CD8-positive, alpha-beta T cell (primary cell): ENCODE measurements at regions of chr10 and their contacts with region 1.

Region 1: GRCh38 chr10:17607603-17608332 is 9.4 kb downstream of the HACD1 start:
- DNase-seq: peak in 3 of 9 experiments; percentile 22 to 75 (median 61)
- ATAC-seq: peak; percentile 69
- H3K4me3 ChIP-seq: no peak overlapping the region
- H3K4me3 Mint-ChIP-seq: no peak overlapping the region
- H3K27ac ChIP-seq: no peak overlapping the region
- H3K27ac Mint-ChIP-seq: no peak overlapping the region
- H3K4me1 ChIP-seq: no peaks in the 10 kb centered on the region
- H3K4me1 Mint-ChIP-seq: peaks cover 2% of the 10 kb centered on the region
- H3K27me3 ChIP-seq: no peaks in the 10 kb centered on the region
- H3K27me3 Mint-ChIP-seq: peaks cover 2% of the 10 kb centered on the region
- CTCF ChIP-seq: peak; percentile 97

Region 2: GRCh38 chr10:17290226-17290625 is 317.5 kb before region 1 on chr10:
- CTCF ChIA-PET with region 1: no interaction called
- POLR2A ChIA-PET with region 1: no interaction called
- intact Hi-C with region 1: loop called in 1 of 2 experiments (anchors 10 kb)
- DNase-seq: peak in 2 of 9 experiments; percentile 24 to 47
- ATAC-seq: no peak
- H3K4me3 ChIP-seq: no peak overlapping the region
- H3K4me3 Mint-ChIP-seq: no peak overlapping the region
- H3K27ac ChIP-seq: no peak overlapping the region
- H3K27ac Mint-ChIP-seq: no peak overlapping the region
- H3K4me1 ChIP-seq: no peaks in the 10 kb centered on the region
- H3K4me1 Mint-ChIP-seq: peaks cover 4% of the 10 kb centered on the region
- H3K27me3 ChIP-seq: no peaks in the 10 kb centered on the region
- H3K27me3 Mint-ChIP-seq: peaks cover 18% of the 10 kb centered on the region
- CTCF ChIP-seq: no peak

Region 3: DNA sequence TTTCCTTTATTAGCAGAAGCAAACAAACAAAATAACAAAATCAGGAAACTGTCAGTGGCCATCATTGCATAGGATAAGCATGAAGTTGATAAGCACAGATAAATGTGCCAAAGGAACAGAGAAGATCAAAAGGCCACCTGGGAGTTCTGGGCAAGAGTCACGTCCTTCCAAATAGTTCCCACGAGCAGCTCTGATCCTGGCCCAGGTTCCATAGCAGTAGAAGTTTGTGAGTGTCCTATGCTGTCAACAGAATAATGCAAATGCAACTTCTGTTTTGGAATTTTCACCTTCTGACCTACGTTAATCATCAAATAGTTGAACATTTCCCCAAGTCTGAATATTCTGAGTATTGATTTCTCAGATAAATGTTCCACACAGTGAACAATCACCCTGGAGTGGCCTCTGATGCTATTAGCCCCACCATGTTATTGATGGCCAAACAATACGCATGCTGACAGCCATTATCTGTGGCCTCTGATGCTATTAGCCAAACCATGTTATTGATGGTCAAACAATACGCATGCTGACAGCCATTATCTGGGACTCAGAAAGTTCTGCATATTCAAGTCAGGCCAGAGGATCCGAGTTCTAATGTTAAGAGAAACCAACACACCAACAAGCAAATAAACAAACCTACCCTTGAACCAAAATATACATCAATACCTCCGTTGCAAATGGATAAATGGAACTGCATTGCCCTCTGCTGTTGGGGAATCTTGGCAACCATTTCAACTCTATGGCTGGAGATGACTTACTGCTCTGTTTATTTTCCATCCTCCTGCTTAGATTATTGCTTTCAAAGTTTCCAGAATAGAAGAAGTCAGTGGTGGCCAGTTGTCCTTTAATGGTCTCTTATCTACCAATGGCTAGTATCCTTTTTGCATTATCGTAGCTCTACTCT is 264.7 kb after region 1 on chr10:
- CTCF ChIA-PET with region 1: no interaction called
- POLR2A ChIA-PET with region 1: no interaction called
- intact Hi-C with region 1: loop called in 1 of 2 experiments (anchors 5 kb)
- DNase-seq: peak in 2 of 9 experiments; percentile 31 to 41
- ATAC-seq: no peak
- H3K4me3 ChIP-seq: no peak overlapping the region
- H3K4me3 Mint-ChIP-seq: no peak overlapping the region
- H3K27ac ChIP-seq: no peak overlapping the region
- H3K27ac Mint-ChIP-seq: no peak overlapping the region
- H3K4me1 ChIP-seq: no peaks in the 10 kb centered on the region
- H3K4me1 Mint-ChIP-seq: no peaks in the 10 kb centered on the region
- H3K27me3 ChIP-seq: no peaks in the 10 kb centered on the region
- H3K27me3 Mint-ChIP-seq: no peaks in the 10 kb centered on the region
- CTCF ChIP-seq: no peak

Region 4: DNA sequence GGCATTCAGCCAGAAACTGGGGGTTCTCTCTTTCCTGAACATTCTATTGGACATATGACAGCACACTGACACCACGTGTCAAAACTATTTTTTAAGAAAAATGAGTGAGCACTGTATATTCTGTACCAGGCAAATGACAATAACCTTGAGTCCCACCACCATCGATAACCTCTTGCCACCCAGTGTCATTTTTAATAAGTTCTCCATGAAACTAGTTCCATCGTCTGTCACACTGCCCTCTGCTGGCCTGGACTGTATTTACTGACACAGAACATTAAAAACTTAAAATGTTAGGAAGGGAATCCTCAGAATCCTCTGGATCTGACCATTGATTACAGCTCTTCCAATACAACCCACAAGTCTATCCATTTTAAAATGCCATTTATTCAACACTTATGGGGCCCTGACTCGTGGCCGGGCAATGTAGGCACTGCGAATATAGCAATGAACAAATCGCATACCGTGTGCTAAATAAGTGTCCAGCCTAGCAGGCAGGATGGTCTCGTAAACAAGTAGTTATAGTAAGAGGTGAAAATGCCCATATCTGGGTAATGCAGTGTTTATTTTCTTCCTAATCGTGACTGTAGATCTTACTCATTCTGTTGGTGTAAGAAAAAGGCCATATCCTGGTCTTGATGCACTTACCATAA is 496.6 kb after region 1 on chr10:
- CTCF ChIA-PET with region 1: no interaction called
- POLR2A ChIA-PET with region 1: no interaction called
- intact Hi-C with region 1: loop called in 1 of 2 experiments (anchors 2 kb)
- DNase-seq: peak in 7 of 9 experiments; percentile 6 to 37 (median 14)
- ATAC-seq: no peak
- H3K4me3 ChIP-seq: no peak overlapping the region
- H3K4me3 Mint-ChIP-seq: no peak overlapping the region
- H3K27ac ChIP-seq: no peak overlapping the region
- H3K27ac Mint-ChIP-seq: no peak overlapping the region
- H3K4me1 ChIP-seq: no peaks in the 10 kb centered on the region
- H3K4me1 Mint-ChIP-seq: no peaks in the 10 kb centered on the region
- H3K27me3 ChIP-seq: no peaks in the 10 kb centered on the region
- H3K27me3 Mint-ChIP-seq: peaks cover 2% of the 10 kb centered on the region
- CTCF ChIP-seq: peak; percentile 21

Region 5: GRCh38 chr10:18238870-18239485 is 631.2 kb after region 1 on chr10:
- CTCF ChIA-PET with region 1: interaction called, 3 read pairs
- POLR2A ChIA-PET with region 1: no interaction called
- intact Hi-C with region 1: loop called (anchors 5 to 10 kb)
- DNase-seq: peak in 2 of 9 experiments; percentile 5 to 29
- ATAC-seq: no peak
- H3K4me3 ChIP-seq: no peak overlapping the region
- H3K4me3 Mint-ChIP-seq: no peak overlapping the region
- H3K27ac ChIP-seq: no peak overlapping the region
- H3K27ac Mint-ChIP-seq: no peak overlapping the region
- H3K4me1 ChIP-seq: no peaks in the 10 kb centered on the region
- H3K4me1 Mint-ChIP-seq: no peaks in the 10 kb centered on the region
- H3K27me3 ChIP-seq: no peaks in the 10 kb centered on the region
- H3K27me3 Mint-ChIP-seq: peaks cover 2% of the 10 kb centered on the region
- CTCF ChIP-seq: no peak